SK-N-SH (cell line): ENCODE measurements at regions of chr1 and their contacts with region 1.

Region 1: GRCh38 chr1:176559878-176560277 is 96.9 kb downstream of the PAPPA2 start:
- DNase-seq: peak; percentile 77
- H3K4me3 ChIP-seq: no peak overlapping the region; a peak in 1 of 4 replicates
- H3K27ac ChIP-seq: no peak overlapping the region
- H3K4me1 ChIP-seq: no peaks in the 10 kb centered on the region
- H3K27me3 ChIP-seq: no peaks in the 10 kb centered on the region
- CTCF ChIP-seq: peak; percentile 80
- EP300 ChIP-seq: no peak
- RAD21 ChIP-seq: peak; percentile 98

Region 2: GRCh38 chr1:176220100-176220689 is 339.7 kb before region 1 on chr1:
- CTCF ChIA-PET with region 1: no interaction called
- POLR2A ChIA-PET with region 1: no interaction called
- DNase-seq: no peak
- H3K4me3 ChIP-seq: no peak overlapping the region
- H3K27ac ChIP-seq: no peak overlapping the region
- H3K4me1 ChIP-seq: no peaks in the 10 kb centered on the region
- H3K27me3 ChIP-seq: no peaks in the 10 kb centered on the region
- CTCF ChIP-seq: no peak
- EP300 ChIP-seq: no peak
- RAD21 ChIP-seq: no peak

Region 3: GRCh38 chr1:176374967-176375569 is 184.8 kb before region 1 on chr1:
- CTCF ChIA-PET with region 1: interaction called, 10 read pairs
- POLR2A ChIA-PET with region 1: no interaction called
- DNase-seq: peak; percentile 45
- H3K4me3 ChIP-seq: no peak overlapping the region; a peak in 1 of 4 replicates
- H3K27ac ChIP-seq: no peak overlapping the region
- H3K4me1 ChIP-seq: no peaks in the 10 kb centered on the region
- H3K27me3 ChIP-seq: no peaks in the 10 kb centered on the region
- CTCF ChIP-seq: peak; percentile 80
- EP300 ChIP-seq: no peak
- RAD21 ChIP-seq: peak; percentile 89

Region 4: GRCh38 chr1:176546825-176547224 is 13.1 kb before region 1 on chr1:
- CTCF ChIA-PET with region 1: interaction called, 22 read pairs
- POLR2A ChIA-PET with region 1: no interaction called
- DNase-seq: no peak
- H3K4me3 ChIP-seq: no peak overlapping the region
- H3K27ac ChIP-seq: no peak overlapping the region
- H3K4me1 ChIP-seq: no peaks in the 10 kb centered on the region
- H3K27me3 ChIP-seq: no peaks in the 10 kb centered on the region; the same call in 1 of the 2 replicates
- CTCF ChIP-seq: no peak
- EP300 ChIP-seq: no peak
- RAD21 ChIP-seq: no peak

Region 5: DNA sequence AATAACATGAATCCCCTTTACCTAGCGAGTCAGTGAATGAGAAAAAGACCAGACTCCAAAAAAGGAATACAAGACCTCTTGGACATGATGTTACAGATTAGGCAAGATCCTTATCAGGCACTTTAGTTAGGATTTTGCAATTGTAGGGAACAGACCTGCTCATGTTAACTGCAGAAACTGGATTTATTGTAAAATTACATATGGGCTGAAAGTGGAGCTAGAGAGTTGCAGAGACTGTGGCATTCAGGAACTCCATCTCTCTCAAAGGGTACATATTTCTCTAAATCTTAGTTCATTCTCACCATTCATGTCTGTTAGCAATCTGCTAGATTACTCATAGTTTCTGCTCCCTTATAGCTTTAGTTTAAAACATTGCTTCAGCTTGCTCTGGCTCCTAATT is 45.3 kb after region 1 on chr1:
- CTCF ChIA-PET with region 1: interaction called, 21 read pairs
- POLR2A ChIA-PET with region 1: no interaction called
- DNase-seq: no peak
- H3K4me3 ChIP-seq: no peak overlapping the region
- H3K27ac ChIP-seq: no peak overlapping the region
- H3K4me1 ChIP-seq: peaks cover 0 to 5% of the 10 kb centered on the region in 2 experiments; a peak in 1 of 4 replicates
- H3K27me3 ChIP-seq: no peaks in the 10 kb centered on the region
- CTCF ChIP-seq: no peak
- EP300 ChIP-seq: peak in 1 of 2 experiments; percentile 37; a peak in 1 of 4 replicates
- RAD21 ChIP-seq: peak; percentile 48

Region 6: GRCh38 chr1:176701151-176701866 is 141.4 kb after region 1 on chr1:
- CTCF ChIA-PET with region 1: interaction called, 10 read pairs
- POLR2A ChIA-PET with region 1: no interaction called
- DNase-seq: no peak
- H3K4me3 ChIP-seq: no peak overlapping the region
- H3K27ac ChIP-seq: no peak overlapping the region
- H3K4me1 ChIP-seq: no peaks in the 10 kb centered on the region; a peak in 1 of 4 replicates
- H3K27me3 ChIP-seq: no peaks in the 10 kb centered on the region
- CTCF ChIP-seq: no peak
- EP300 ChIP-seq: no peak
- RAD21 ChIP-seq: no peak

Region 7: DNA sequence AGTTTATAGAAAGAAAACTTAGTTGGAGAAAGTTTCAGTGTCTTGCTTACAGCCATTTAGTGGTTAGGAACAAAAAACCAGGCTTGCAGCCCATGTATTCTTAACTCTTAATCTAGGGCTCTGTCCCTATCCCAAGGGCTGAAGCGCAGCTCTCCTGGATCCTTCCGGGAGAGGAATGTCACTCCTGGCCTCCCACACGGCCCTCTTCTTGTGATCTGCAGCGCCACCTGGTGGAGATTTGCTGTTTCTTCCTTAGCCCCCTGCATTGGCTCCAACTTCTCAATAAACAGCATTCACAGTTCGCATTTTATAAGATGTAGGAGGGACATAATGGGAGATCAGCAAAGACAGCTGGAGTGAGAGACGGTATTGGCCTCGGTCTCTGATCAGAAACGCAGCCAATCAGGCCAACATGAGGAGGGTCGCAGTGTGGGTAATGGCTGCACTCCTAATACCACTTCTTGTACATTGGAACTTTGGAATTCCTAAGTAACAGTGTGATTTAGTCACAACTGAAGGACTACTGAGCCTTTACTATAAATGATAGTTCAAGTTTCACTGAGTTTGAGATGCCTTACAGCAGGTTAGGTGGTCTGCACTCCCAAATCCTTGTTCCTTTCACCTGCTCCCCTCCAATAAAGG is 321.2 kb after region 1 on chr1:
- CTCF ChIA-PET with region 1: interaction called, 69 read pairs
- POLR2A ChIA-PET with region 1: no interaction called
- DNase-seq: peak; percentile 75
- H3K4me3 ChIP-seq: peak overlapping the region in 1 of 2 experiments; percentile 20; a peak in 1 of 4 replicates
- H3K27ac ChIP-seq: no peak overlapping the region
- H3K4me1 ChIP-seq: peaks cover 0 to 4% of the 10 kb centered on the region in 2 experiments; a peak in 1 of 4 replicates
- H3K27me3 ChIP-seq: no peaks in the 10 kb centered on the region
- CTCF ChIP-seq: peak; percentile 93
- EP300 ChIP-seq: no peak
- RAD21 ChIP-seq: peak; percentile 86